AG04449 (cell line): ENCODE measurements at regions of chr4 and their contacts with region 1.

Region 1: DNA sequence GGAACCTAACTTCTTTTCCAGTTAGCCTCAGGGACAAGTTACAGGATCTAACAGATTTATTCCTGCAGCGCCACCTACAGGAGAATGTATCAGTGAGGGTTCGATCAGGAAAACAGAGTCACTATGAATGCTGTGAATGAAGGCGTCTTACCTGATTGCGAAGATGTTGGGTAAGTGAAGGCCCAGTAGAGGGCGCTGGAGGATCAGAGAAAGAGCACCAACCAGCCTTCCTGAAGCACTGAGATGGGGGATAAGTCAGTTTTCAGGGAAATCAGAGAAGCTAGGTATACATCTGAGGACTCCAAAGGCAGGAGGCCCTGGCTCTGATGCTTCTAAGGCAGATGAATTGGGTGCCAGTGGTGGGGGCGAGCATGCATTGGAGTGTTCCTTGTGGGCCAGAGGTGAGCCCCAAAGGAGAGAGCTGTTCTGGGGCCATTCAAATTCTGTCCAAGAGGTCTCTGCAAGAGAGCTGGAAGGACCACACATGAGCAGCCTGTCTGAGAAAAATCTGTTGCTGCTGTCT is 169.9 kb upstream of the AADAT start:
- DNase-seq: peak; percentile 74
- H3K4me3 ChIP-seq: no peak overlapping the region
- CTCF ChIP-seq: peak; percentile 83

Region 2: GRCh38 chr4:169663831-169664230 is 595.9 kb before region 1 on chr4:
- CTCF ChIA-PET with region 1: no interaction called
- POLR2A ChIA-PET with region 1: no interaction called
- DNase-seq: no peak
- H3K4me3 ChIP-seq: no peak overlapping the region
- CTCF ChIP-seq: no peak

Region 3: DNA sequence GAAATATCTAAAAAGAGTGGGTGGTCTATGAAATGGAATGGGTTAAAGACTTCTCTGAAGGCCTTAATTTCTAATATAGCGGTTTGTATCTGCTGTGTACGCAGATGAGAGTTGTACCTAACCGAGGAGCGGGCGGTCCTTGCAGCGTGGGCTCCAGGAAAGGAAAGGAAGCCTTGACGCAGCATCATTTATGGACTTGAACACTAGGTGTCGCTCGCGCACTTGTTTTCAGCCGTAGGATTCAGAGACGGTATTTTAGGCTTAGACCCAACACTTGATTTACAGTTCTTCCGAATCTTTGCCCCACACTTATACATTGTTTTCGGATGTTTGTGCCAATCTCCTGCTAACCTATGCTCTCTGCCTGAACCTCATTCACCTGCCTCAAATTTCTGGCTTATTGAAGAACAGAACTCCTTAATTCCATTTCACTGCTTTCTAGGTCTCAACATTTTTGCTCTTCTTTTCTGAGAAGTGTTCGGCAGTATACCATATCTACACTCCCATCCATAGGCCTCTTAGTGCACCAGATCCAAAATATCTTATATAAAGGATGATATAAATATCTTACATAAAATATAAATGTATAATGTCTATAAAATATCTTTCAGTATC is 121.0 kb before region 1 on chr4:
- CTCF ChIA-PET with region 1: interaction called, 41 read pairs
- POLR2A ChIA-PET with region 1: no interaction called
- DNase-seq: peak; percentile 9
- H3K4me3 ChIP-seq: no peak overlapping the region
- CTCF ChIP-seq: peak; percentile 81

Region 4: DNA sequence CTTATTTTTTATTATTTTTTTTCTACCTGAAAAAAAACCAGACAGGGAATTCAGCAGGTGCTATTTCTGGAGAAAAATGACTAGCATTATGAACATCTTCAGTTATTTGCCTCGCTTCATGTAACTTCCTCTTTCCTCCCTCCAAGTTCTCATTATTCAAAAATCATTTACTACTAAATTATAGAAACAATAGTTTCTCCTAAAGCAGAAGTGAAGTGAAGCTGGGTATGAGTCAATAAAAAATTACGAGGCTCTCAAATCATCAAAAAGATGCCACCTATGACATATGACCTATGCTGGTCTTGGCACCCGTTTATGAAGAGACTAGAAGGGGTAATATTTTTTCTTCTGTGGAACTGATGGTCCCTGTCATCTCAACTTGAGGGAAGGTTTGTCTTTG is 24.9 kb before region 1 on chr4:
- CTCF ChIA-PET with region 1: interaction called, 21 read pairs
- POLR2A ChIA-PET with region 1: no interaction called
- DNase-seq: no peak
- H3K4me3 ChIP-seq: no peak overlapping the region
- CTCF ChIP-seq: no peak

Region 5: DNA sequence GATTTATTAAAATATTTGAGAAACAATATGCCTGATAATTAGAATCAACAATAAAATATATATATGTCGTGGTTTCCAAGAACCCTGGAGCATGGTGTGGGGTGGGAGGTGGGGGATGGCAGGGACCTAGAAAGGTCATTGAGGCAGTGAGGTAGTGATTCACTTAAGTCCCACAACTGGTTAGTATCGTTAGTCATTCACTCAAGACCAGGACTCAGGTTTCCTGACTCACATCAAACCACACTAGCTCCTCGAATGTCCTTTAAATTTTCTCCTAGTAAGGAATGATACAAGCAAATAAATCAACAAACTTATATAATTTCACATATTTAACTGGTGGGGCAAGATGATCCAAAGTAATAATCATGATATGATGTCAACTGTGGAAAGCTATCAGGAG is 11.1 kb before region 1 on chr4:
- CTCF ChIA-PET with region 1: interaction called, 91 read pairs
- POLR2A ChIA-PET with region 1: no interaction called
- DNase-seq: no peak
- H3K4me3 ChIP-seq: no peak overlapping the region
- CTCF ChIP-seq: no peak

Region 6: DNA sequence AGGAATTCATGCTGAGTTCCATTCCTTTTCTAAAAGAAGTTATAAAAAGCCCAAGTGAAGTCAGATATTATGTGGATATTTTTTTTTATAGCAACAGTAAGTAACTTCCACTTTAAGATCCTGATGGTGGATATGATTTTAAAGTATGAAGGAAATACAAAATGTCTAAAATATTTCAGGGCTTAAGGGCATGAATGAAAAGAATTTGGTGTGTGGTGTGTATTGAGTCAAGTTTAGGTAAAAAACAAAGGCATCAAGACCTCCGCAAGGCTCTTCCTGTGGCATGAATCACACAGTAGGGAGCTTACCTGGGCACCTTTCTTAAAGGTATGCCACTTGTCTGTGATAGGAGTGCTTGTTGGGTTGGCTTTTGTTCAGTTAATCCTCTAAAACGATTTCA is 92.5 kb after region 1 on chr4:
- CTCF ChIA-PET with region 1: no interaction called
- POLR2A ChIA-PET with region 1: no interaction called
- DNase-seq: no peak
- H3K4me3 ChIP-seq: no peak overlapping the region
- CTCF ChIP-seq: no peak

Region 7: DNA sequence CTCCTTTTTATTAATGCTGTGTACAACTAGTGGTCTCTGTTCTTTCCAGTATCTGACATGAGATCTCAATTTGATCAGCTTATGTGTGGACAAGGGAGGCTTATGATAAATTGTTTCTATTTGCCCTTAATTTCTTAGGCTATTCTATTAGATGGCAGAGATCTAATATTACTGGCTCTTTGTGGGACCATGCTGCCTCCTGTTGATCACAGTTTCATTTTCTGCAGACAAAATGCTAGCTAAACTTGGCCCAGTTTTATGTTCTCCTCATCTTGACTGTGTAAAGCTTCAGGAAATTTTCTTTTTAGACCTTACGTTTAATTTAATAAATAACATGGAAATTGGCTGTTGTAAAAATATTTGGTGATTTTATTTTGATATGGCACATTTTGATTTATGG is 457.2 kb after region 1 on chr4:
- CTCF ChIA-PET with region 1: interaction called, 75 read pairs
- POLR2A ChIA-PET with region 1: no interaction called
- DNase-seq: no peak
- H3K4me3 ChIP-seq: no peak overlapping the region
- CTCF ChIP-seq: no peak

Region 8: GRCh38 chr4:172202480-172203076 is 1942.9 kb after region 1 on chr4:
- CTCF ChIA-PET with region 1: interaction called, 26 read pairs
- POLR2A ChIA-PET with region 1: no interaction called
- DNase-seq: no peak
- H3K4me3 ChIP-seq: no peak overlapping the region
- CTCF ChIP-seq: peak; percentile 60